Aorta (tissue), 5 donors: ENCODE measurements at regions of chr13 and their contacts with region 1.

Region 1: DNA sequence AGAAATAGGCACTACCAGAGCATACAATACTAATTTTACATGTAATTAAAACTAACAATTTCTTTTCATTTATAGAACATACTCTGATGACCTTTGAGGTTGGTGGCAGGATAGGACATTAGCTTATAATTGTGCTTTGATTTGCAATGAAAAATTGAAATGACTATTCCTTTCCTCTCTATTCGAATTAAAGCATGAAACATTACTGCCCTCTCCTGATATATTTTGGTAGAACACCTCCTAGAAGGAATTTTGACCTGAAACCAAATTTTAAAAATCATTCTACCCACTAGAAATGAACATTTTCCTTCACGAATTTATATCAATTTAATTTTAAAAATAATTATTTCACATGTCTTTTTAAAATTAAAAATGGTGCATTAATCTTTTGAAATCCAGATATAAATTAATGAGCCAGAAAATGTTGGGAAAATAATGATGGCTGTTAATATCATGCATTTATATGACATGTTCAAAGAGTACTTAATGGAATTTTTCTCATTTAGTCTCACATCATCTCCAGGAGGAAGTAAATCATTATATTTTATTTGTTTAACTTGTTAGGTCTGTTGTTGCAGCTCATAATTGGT is 556.3 kb upstream of the ARGLU1 start:
- DNase-seq: no peak
- ATAC-seq: no peak
- H3K4me3 ChIP-seq: no peak overlapping the region
- H3K27ac ChIP-seq: no peak overlapping the region
- H3K4me1 ChIP-seq: no peaks in the 10 kb centered on the region
- H3K27me3 ChIP-seq: no peaks in the 10 kb centered on the region

Region 2: GRCh38 chr13:106555631-106556328 is 568.4 kb before region 1 on chr13:
- intact Hi-C with region 1: loop called in 1 of 2 experiments (anchors 10 kb)
- DNase-seq: no peak
- ATAC-seq: no peak
- H3K4me3 ChIP-seq: no peak overlapping the region
- H3K27ac ChIP-seq: no peak overlapping the region
- H3K4me1 ChIP-seq: peaks cover 3 to 4% of the 10 kb centered on the region in 2 donors
- H3K27me3 ChIP-seq: no peaks in the 10 kb centered on the region

Region 3: DNA sequence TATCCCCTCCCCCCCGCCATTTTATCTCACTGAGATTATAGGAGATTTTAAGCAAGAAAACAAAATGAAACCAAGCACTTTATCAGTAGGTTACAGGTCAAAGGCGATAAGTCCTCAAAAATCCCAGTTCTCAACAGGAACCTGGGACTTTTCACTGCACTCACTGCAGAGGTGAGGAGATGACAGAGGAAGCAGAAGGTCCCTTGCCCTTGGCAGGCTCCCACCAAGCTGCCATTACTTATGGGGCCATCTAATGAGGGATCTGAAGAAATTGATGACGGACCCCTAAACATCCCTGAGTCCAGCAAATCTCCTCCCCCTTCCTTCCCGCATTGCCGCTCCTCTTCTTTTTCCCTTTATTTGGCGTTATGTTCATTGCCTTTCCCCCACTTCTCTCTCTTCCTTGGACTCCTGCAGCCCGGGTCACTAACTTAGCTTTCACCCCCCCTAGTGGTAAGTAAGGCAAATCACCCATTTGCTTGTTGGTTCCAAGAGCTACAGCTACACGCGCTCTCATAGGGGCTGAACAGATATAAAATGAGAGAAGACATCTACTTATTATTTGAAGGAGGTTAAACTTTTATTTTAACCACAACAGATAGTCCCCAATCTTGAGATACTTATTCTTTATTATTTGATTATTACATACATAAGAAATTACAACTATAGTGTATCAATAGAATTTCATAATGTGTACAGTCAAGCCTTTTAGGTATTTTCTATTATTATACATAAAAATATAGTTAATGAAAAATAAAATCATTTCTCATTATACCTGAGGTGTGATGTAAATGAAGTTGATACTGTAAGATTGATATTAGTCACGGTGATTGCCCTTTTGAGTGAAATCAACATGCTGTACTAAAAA is 504.3 kb before region 1 on chr13:
- intact Hi-C with region 1: loop called in 1 of 2 experiments (anchors 10 kb)
- DNase-seq: no peak
- ATAC-seq: peak; percentile 91
- H3K4me3 ChIP-seq: no peak overlapping the region
- H3K27ac ChIP-seq: no peak overlapping the region
- H3K4me1 ChIP-seq: no peaks in the 10 kb centered on the region
- H3K27me3 ChIP-seq: no peaks in the 10 kb centered on the region

Region 4: GRCh38 chr13:106911627-106912026 is 212.6 kb before region 1 on chr13:
- intact Hi-C with region 1: loop called (anchors 5 kb)
- DNase-seq: no peak
- ATAC-seq: no peak
- H3K4me3 ChIP-seq: no peak overlapping the region
- H3K27ac ChIP-seq: no peak overlapping the region
- H3K4me1 ChIP-seq: peaks cover 0 to 1% of the 10 kb centered on the region in 2 donors
- H3K27me3 ChIP-seq: no peaks in the 10 kb centered on the region

Region 5: DNA sequence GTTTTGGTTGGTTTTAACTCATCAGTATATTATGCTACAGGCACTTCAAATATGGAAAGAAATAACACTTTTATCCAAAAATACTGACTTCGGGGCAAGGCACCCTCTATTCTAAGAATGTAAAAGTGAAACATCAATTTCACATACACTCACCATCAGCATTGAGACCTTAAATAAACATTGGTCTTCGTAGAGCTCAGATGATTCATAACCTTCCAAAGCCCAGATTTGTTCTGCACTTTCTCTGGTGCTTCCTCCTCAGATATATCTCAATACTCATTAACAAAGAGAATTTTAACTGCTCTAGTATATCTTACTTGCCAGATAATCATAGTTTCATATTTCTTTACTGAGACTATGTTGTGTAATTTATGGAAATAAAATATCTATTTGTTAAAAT is 296.8 kb after region 1 on chr13:
- intact Hi-C with region 1: no loop called
- DNase-seq: no peak
- ATAC-seq: no peak
- H3K4me3 ChIP-seq: no peak overlapping the region
- H3K27ac ChIP-seq: no peak overlapping the region
- H3K4me1 ChIP-seq: no peaks in the 10 kb centered on the region
- H3K27me3 ChIP-seq: no peaks in the 10 kb centered on the region